ENCODE measurements at regions of chr14 and their contacts with region 1.

Region 1: DNA sequence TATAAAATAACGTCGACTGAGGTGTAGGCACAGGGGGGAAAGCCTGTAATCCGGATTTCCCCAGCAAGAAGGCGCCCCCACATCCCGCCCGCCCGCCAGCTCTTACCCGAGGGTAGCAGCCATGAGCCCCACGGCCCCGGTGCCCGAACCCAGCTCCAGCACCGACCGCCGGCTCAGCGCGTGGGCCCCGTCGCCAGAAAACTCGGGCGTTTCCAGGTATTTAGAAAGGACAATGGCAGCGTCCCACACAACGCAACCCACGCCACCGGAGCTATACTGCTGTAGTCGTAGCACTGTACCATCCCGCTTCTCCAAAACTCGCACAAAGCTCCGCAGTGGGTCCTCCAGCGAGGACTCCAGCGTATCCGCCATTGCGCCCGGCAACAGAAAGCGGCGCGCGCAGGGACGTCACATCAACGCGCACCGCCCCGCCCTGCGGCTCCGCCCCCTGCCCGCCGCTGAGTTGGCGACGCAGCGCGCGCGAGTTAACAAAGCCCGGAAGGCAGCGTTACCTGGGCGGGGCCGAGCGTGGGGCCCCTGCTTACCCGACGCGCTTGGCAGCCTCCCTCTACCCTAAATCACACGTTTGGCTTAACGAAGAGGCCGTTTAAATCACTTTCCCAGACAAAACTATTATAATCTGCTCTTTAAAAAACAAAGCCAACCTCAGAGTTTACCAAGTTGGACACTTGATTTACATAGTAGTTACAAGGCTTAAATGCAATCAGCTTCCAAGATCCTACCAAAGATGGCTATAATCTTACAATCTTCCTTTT is at the start of gene VCPKMT:
- DNase-seq: peak; percentile 98
- ATAC-seq: peak; percentile 99
- H3K4me3 Mint-ChIP-seq: peak within 1 kb of the TSS; percentile 95
- H3K27ac Mint-ChIP-seq: peak within 1 kb of the TSS; percentile 97
- H3K4me1 Mint-ChIP-seq: peaks cover 25% of the 10 kb centered on the region
- H3K27me3 Mint-ChIP-seq: no peaks in the 10 kb centered on the region
- total RNA-seq, gene VCPKMT: 6.6 to 10.4 TPM

Region 2: DNA sequence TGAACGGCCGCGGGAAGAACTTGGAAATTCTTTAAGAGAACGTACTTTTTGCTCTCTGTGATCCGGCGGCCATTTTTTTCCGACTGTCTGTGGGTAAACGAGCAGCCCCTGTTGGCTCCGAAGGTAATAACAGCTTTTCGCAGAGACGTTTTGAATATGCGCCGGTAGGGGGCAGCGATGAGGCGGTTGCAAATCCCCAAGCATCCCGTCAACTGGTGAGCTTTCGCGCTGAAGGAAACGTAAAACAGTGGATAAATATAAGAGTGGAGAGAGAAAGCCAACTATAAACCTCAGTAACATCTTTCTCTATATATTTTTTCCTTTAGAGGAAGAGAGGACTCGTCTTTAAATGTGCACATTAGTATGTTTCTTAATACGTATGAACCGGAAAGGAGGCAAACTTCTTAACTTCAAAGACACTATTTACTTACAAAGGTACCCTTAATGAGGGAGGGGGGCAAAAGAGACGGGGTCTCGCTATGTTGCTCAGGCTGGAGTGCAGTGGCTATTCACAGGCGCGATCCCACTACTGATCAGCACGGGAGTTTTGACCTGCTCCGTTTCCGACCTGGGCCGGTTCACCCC is 254.2 kb before region 1 on chr14:
- CTCF ChIA-PET with region 1: interaction called, 111 read pairs
- POLR2A ChIA-PET with region 1: interaction called, 4 read pairs
- intact Hi-C with region 1: loop called (anchors 1 kb)
- DNase-seq: peak; percentile 92
- ATAC-seq: peak; percentile 13
- H3K4me3 Mint-ChIP-seq: no peak overlapping the region
- H3K27ac Mint-ChIP-seq: no peak overlapping the region
- H3K4me1 Mint-ChIP-seq: peaks cover 20% of the 10 kb centered on the region
- H3K27me3 Mint-ChIP-seq: no peaks in the 10 kb centered on the region

Region 3: DNA sequence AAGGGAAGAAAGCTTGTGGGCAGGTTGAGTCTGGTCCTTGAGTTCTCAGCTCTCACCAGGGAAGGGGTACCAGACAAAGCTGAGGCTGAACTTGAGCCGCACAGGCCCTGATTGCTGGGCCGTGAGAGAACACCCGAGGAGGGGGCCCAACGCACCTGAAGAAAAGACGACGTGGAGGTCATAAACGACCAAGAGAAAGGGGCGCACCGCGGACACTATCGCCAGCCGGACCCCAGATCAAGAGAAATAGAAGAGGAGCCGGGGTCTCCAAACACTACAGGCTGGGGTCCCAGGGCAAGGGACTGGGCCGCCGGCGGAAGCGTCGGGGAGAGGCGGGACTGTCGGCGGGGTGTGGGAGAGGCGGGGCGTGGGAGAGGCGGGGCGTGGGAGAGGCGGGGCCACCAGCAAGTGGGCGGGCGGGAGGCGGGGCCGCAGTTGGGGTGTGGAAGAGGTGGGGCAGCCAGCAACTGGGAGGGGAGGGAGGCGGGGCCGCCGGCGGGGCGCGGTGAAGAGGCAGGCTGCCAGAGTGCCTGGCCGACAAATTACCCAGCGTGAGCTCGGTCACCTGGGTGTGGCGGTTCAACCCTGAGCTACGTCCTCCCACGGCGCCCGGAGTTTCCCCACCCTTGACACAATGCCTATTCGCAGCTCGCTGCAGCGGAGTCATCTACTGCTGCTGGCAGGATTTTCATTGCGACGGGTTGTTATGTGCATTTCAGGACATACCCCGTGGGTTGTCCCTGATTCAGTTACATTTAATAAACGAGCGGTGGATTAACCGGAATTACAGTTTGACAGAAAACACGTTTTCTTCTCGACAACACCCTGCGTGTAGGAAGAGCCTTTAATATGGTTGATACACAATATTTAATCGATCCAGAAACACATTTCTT is 248.3 kb before region 1 on chr14:
- CTCF ChIA-PET with region 1: interaction called, 111 read pairs
- POLR2A ChIA-PET with region 1: interaction called, 4 read pairs
- intact Hi-C with region 1: loop called (anchors 1 kb)
- DNase-seq: peak; percentile 100
- ATAC-seq: peak; percentile 87
- H3K4me3 Mint-ChIP-seq: peak overlapping the region; percentile 98
- H3K27ac Mint-ChIP-seq: peak overlapping the region; percentile 96
- H3K4me1 Mint-ChIP-seq: peaks cover 22% of the 10 kb centered on the region
- H3K27me3 Mint-ChIP-seq: no peaks in the 10 kb centered on the region